CD4-positive, alpha-beta T cell (primary cell): ENCODE measurements at regions of chr12 and their contacts with region 1.

Region 1: DNA sequence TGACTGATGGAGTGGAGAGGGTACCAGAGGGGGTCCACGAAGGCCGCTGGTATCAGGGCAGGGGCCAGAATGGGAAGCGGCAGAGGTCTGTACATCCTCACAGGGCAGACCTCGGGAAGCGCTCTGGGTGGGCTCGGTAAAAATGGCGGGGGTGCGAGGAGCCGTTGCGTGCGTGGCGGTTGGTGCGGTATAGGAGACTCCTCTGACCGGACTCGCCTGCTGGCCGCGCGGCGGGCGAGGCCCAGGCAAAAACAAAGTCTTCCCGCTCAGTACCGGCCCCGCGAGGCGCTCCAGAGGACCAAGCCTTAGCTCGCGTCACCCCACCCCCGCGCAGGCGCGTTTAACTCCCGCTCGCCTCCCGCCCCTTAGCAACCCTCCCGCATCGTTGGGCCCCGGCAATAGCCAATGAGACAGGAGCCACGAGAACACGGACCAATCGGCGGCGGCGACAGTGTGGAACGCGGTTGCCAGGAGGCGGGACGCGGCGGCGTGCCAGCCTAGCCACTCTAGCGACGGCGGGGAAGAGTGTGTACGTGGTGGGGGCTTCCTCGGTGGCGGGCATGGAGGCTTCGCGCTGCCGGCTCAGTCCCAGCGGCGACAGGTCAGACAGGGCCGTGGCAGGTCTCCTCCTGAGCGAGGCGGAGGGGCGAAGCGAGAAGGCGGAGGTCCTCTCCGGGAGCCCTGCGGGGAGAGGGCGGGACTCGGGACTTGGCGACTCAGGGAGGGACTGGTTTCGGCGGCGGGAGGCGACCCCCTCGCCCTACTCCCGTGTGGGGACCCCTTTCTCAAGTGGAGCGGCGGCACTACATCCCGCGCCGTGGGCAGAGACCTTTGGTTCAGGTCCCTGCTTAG is at the start of gene TULP3:
- DNase-seq: peak; percentile 97 to 99 (median 98)
- ATAC-seq: peak; percentile 98
- H3K4me3 ChIP-seq: peak within 1 kb of the TSS; percentile 100
- H3K4me3 Mint-ChIP-seq: peak within 1 kb of the TSS; percentile 97
- H3K27ac ChIP-seq: peak within 1 kb of the TSS; percentile 74 to 77
- H3K27ac Mint-ChIP-seq: peak within 1 kb of the TSS; percentile 83
- H3K4me1 ChIP-seq: peaks cover 19% of the 10 kb centered on the region
- H3K4me1 Mint-ChIP-seq: peaks cover 29% of the 10 kb centered on the region
- H3K27me3 ChIP-seq: no peaks in the 10 kb centered on the region
- H3K27me3 Mint-ChIP-seq: no peaks in the 10 kb centered on the region
- CTCF ChIP-seq: no peak
- total RNA-seq, gene TULP3: 4.2 to 5.5 TPM

Region 2: GRCh38 chr12:2691006-2691344 is 199.6 kb before region 1 on chr12:
- CTCF ChIA-PET with region 1: no interaction called
- POLR2A ChIA-PET with region 1: interaction called, 7 read pairs
- intact Hi-C with region 1: loop called in 1 of 2 experiments (anchors 5 kb)
- DNase-seq: peak; percentile 19 to 82 (median 44)
- ATAC-seq: peak; percentile 67
- H3K4me3 ChIP-seq: peak overlapping the region; percentile 77
- H3K4me3 Mint-ChIP-seq: peak overlapping the region; percentile 95
- H3K27ac ChIP-seq: peak overlapping the region; percentile 50 to 83
- H3K27ac Mint-ChIP-seq: peak overlapping the region; percentile 84
- H3K4me1 ChIP-seq: peaks cover 31% of the 10 kb centered on the region
- H3K4me1 Mint-ChIP-seq: peaks cover 49% of the 10 kb centered on the region
- H3K27me3 ChIP-seq: no peaks in the 10 kb centered on the region
- H3K27me3 Mint-ChIP-seq: peaks cover 5% of the 10 kb centered on the region
- CTCF ChIP-seq: no peak

Region 3: GRCh38 chr12:2877047-2877952 is 13.3 kb before region 1 on chr12 and contains the starts of genes FOXM1 and RHNO1:
- CTCF ChIA-PET with region 1: interaction called, 3 read pairs
- POLR2A ChIA-PET with region 1: interaction called, 77 read pairs
- intact Hi-C with region 1: loop called in 1 of 2 experiments (anchors 1 kb)
- DNase-seq: peak; percentile 75 to 92 (median 84)
- ATAC-seq: peak; percentile 80
- H3K4me3 ChIP-seq: peak within 1 kb of the TSS; percentile 80
- H3K4me3 Mint-ChIP-seq: peak within 1 kb of the TSS; percentile 97
- H3K27ac ChIP-seq: peak within 1 kb of the TSS; percentile 81 to 86
- H3K27ac Mint-ChIP-seq: peak within 1 kb of the TSS; percentile 99
- H3K4me1 ChIP-seq: peaks cover 39% of the 10 kb centered on the region
- H3K4me1 Mint-ChIP-seq: peaks cover 30% of the 10 kb centered on the region
- H3K27me3 ChIP-seq: no peaks in the 10 kb centered on the region
- H3K27me3 Mint-ChIP-seq: no peaks in the 10 kb centered on the region
- CTCF ChIP-seq: no peak
- total RNA-seq, gene FOXM1: 0.59 to 0.80 TPM
- total RNA-seq, gene RHNO1: 26.5 to 31.3 TPM